ENCODE measurements at regions of chr9 and their contacts with region 1.

Region 1: DNA sequence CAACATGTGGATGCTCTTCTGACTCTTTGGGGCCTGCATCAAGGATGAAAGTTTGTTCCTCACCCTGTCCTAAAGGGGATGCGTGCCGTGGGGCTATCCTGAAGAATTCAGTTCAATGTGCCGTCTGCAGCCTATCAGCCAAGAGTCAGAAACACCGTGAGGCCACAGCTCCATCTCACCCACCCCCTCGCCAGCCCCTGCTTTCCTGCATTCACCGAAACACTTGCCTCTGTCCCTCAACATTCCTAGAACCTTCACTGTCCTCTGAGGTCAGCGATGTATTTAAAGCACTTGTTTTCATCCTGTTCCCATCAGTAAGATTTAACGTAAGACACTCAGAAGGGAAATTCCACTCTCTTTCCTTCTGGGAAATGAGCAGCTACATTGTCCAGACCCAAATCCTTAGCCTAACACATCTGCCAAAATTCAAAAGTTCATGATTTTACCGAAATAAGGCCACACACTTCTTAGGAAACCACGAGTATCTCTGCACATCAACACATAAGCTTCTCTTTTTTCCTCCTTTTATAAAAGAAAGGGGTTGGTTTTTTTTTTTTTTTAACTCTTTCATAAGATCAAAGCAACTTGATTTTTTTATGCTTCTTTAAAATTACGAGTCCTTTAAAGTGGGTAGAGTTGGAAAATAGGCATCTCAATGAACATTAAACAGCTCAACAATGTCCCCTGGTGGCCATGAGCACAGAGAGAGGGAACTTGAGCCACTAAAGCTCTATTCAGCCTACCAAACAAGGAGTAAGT is 100.7 kb downstream of the SUSD1 start:
- DNase-seq: peak; percentile 45
- CTCF ChIP-seq: peak; percentile 87

Region 2: DNA sequence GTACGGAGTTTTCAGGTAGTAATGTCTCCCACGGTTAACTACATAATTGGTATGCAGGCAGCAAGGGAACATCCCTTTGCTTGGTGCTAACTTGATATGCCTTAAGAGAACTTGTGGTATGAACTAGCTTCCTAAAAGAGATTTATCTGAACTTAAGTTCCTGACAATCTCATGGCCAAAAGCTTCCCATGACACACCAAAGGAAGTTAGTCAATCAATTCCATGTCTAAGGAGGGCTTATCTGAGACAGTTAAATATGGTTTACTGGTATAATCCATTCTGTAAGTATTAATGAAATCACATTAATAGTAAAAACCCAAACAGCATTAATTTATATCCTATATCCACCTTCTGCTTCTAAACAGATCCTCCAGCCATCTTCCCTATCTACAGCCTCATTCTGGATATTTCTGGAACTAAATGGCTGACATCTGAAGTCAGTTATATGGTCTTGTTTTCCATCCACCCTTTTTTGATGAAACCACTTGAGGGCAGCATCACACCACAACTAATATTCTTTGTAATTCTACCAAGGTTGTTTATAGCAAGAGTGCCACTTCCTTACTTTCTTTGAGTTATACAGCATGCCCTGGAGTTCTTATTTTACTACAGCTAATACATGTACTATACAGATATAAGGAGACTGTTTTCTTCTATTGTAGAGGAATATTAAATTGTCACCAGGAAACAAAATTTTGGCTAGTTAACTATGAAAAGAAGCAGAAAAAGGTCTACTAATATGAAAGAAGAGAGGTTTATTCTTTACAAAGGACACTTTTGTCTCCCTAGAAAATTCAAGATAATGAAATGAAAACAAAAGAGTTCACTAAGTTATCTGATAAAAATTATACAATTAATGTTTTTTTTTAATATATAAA is 314.4 kb before region 1 on chr9:
- CTCF ChIA-PET with region 1: interaction called, 66 read pairs
- POLR2A ChIA-PET with region 1: no interaction called
- DNase-seq: peak; percentile 66
- CTCF ChIP-seq: peak; percentile 57

Region 3: GRCh38 chr9:111936391-111936790 is 138.0 kb before region 1 on chr9:
- CTCF ChIA-PET with region 1: interaction called, 15 read pairs
- POLR2A ChIA-PET with region 1: no interaction called
- DNase-seq: no peak
- CTCF ChIP-seq: no peak

Region 4: GRCh38 chr9:112028280-112029221 is 45.9 kb before region 1 on chr9:
- CTCF ChIA-PET with region 1: interaction called, 16 read pairs
- POLR2A ChIA-PET with region 1: interaction called, 11 read pairs
- DNase-seq: peak; percentile 57
- CTCF ChIP-seq: no peak

Region 5: GRCh38 chr9:112041536-112042243 is 32.7 kb before region 1 on chr9:
- CTCF ChIA-PET with region 1: no interaction called
- POLR2A ChIA-PET with region 1: no interaction called
- DNase-seq: no peak
- CTCF ChIP-seq: no peak

Region 6: GRCh38 chr9:112061152-112061740 is 13.2 kb before region 1 on chr9:
- CTCF ChIA-PET with region 1: interaction called, 54 read pairs
- POLR2A ChIA-PET with region 1: interaction called, 7 read pairs
- DNase-seq: peak; percentile 72
- CTCF ChIP-seq: no peak

Region 7: GRCh38 chr9:112249277-112249676 is 174.8 kb after region 1 on chr9:
- CTCF ChIA-PET with region 1: no interaction called
- POLR2A ChIA-PET with region 1: no interaction called
- DNase-seq: peak; percentile 36
- CTCF ChIP-seq: no peak

Measured in GM10248 (cell line).